ENCODE measurements at regions of chr11 and their contacts with region 1.

Region 1: GRCh38 chr11:60831143-60831500 is 10.8 kb upstream of the CCDC86 start:
- DNase-seq: peak; percentile 74 to 88
- H3K4me3 ChIP-seq: no peak overlapping the region
- H3K27ac ChIP-seq: no peak overlapping the region
- H3K4me1 ChIP-seq: 0 out of 2 replicates have a peak, but pooled peaks cover 3% of the 10 kb centered on the region
- H3K27me3 ChIP-seq: peaks cover 17% of the 10 kb centered on the region; the same call in 1 of the 2 replicates
- CTCF ChIP-seq: peak; percentile 99

Region 2: GRCh38 chr11:60680455-60681119 is 150.5 kb before region 1 on chr11:
- CTCF ChIA-PET with region 1: no interaction called
- POLR2A ChIA-PET with region 1: no interaction called
- intact Hi-C with region 1: no loop called
- DNase-seq: no peak
- H3K4me3 ChIP-seq: no peak overlapping the region
- H3K27ac ChIP-seq: no peak overlapping the region
- H3K4me1 ChIP-seq: no peaks in the 10 kb centered on the region
- H3K27me3 ChIP-seq: no peaks in the 10 kb centered on the region
- CTCF ChIP-seq: no peak

Region 3: GRCh38 chr11:60797846-60798630 is 33.1 kb before region 1 on chr11:
- CTCF ChIA-PET with region 1: no interaction called
- POLR2A ChIA-PET with region 1: interaction called, 11 read pairs
- intact Hi-C with region 1: no loop called
- DNase-seq: no peak
- H3K4me3 ChIP-seq: no peak overlapping the region
- H3K27ac ChIP-seq: no peak overlapping the region
- H3K4me1 ChIP-seq: no peaks in the 10 kb centered on the region
- H3K27me3 ChIP-seq: peaks cover 96% of the 10 kb centered on the region
- CTCF ChIP-seq: no peak

Region 4: GRCh38 chr11:60899046-60899936 is 68.2 kb after region 1 on chr11:
- CTCF ChIA-PET with region 1: interaction called, 10 read pairs
- POLR2A ChIA-PET with region 1: no interaction called
- intact Hi-C with region 1: loop called (anchors 1 kb)
- DNase-seq: peak; percentile 53 to 61
- H3K4me3 ChIP-seq: no peak overlapping the region
- H3K27ac ChIP-seq: peak overlapping the region; percentile 12; the same call in 1 of the 2 replicates
- H3K4me1 ChIP-seq: peaks cover 5% of the 10 kb centered on the region
- H3K27me3 ChIP-seq: no peaks in the 10 kb centered on the region
- CTCF ChIP-seq: peak; percentile 98

Region 5: GRCh38 chr11:61173456-61173855 is 342.3 kb after region 1 on chr11:
- CTCF ChIA-PET with region 1: interaction called, 3 read pairs
- POLR2A ChIA-PET with region 1: no interaction called
- intact Hi-C with region 1: loop called (anchors 1 kb)
- DNase-seq: peak; percentile 35 to 86
- H3K4me3 ChIP-seq: no peak overlapping the region
- H3K27ac ChIP-seq: no peak overlapping the region
- H3K4me1 ChIP-seq: no peaks in the 10 kb centered on the region
- H3K27me3 ChIP-seq: peaks cover 24% of the 10 kb centered on the region
- CTCF ChIP-seq: peak; percentile 66

Region 6: GRCh38 chr11:61384271-61385242 is 553.4 kb after region 1 on chr11:
- CTCF ChIA-PET with region 1: interaction called, 4 read pairs
- POLR2A ChIA-PET with region 1: no interaction called
- intact Hi-C with region 1: loop called (anchors 1 kb)
- DNase-seq: no peak
- H3K4me3 ChIP-seq: no peak overlapping the region
- H3K27ac ChIP-seq: no peak overlapping the region
- H3K4me1 ChIP-seq: peaks cover 4% of the 10 kb centered on the region
- H3K27me3 ChIP-seq: no peaks in the 10 kb centered on the region
- CTCF ChIP-seq: no peak

Measured in PC-9 (cell line).